A673 (cell line): ENCODE measurements at regions of chr9 and their contacts with region 1.

Region 1: DNA sequence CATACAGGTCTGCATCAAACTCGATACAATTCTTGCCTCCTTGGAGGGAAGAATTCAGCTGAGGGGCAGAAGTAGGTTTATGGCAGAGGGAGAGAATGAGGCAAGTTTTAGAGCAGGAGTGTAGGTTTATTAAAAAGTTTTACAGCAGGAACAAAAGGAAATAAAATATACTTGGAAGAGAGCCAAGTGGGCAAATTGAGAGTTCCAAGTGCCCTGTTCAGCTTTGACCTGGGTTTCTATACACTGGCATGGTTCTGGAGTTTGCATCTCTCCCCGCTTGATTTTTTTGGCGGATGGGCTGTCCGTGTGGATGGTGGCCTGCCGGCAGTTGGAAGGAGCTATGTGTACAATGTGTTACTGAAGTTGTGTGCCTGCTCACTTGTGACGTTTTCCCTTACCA is 116.1 kb downstream of the ALDH1A1 start:
- DNase-seq: no peak
- H3K4me3 ChIP-seq: no peak overlapping the region
- H3K27ac ChIP-seq: no peak overlapping the region
- H3K4me1 ChIP-seq: no peaks in the 10 kb centered on the region
- H3K27me3 ChIP-seq: no peaks in the 10 kb centered on the region
- CTCF ChIP-seq: no peak

Region 2: DNA sequence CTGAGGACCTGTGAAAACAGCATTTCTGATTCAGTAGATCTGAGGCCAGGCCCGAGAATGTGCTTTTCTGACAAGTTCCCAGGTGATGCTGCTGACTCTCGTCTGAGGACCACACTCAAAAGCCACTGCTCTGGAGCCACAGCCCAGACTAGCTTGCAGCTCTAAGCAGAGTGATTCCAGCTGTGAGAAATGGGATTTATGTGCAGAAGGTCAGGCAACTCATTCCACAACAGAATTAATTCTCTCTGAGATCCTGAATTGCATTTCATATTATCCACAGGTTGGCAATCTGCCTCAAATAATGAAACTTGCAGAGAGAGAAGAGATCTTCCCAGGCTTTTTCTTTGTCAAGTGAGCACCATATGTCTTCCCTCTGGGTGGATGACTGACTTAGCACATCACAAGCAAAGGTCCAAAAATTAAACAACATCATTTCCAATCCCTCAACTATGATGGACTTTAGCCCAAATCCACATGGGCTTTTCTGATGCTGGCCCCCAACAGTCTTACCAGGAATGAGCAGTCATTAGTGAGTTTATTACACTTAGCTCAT is 24.2 kb before region 1 on chr9:
- CTCF ChIA-PET with region 1: no interaction called
- POLR2A ChIA-PET with region 1: no interaction called
- intact Hi-C with region 1: loop called (anchors 1 kb)
- DNase-seq: no peak
- H3K4me3 ChIP-seq: no peak overlapping the region
- H3K27ac ChIP-seq: no peak overlapping the region
- H3K4me1 ChIP-seq: no peaks in the 10 kb centered on the region
- H3K27me3 ChIP-seq: no peaks in the 10 kb centered on the region
- CTCF ChIP-seq: no peak

Region 3: DNA sequence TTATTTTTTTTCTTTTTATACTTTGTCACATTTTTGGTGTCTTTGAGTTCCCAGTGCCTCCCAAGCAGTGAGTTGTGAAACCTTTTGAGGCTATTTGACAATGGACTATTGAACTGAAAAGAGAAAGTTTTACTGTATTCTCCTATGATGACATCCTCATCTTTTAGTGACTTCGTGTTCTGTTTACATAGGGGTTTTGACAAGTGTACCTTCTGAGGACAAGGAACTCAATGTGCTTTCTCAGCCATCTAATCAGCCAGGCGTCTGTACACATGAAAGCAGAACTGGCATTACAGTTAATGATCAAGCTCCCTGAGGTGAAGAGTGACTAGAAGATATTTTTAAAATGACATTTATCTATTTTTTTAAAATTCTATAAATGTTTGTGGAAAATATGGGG is 490.4 kb after region 1 on chr9:
- CTCF ChIA-PET with region 1: no interaction called
- POLR2A ChIA-PET with region 1: no interaction called
- intact Hi-C with region 1: no loop called
- DNase-seq: no peak
- H3K4me3 ChIP-seq: no peak overlapping the region
- H3K27ac ChIP-seq: no peak overlapping the region
- H3K4me1 ChIP-seq: no peaks in the 10 kb centered on the region
- H3K27me3 ChIP-seq: peaks cover 22% of the 10 kb centered on the region
- CTCF ChIP-seq: no peak